ENCODE measurements at regions of chr17 and their contacts with region 1.

Region 1: GRCh38 chr17:50931144-50931908 is 65.2 kb upstream of the TOB1 start:
- DNase-seq: peak; percentile 95
- H3K4me3 ChIP-seq: peak overlapping the region; percentile 41 to 62
- H3K27ac ChIP-seq: peak overlapping the region; percentile 93 to 98
- H3K4me1 ChIP-seq: peaks cover 15 to 41% of the 10 kb centered on the region in 2 experiments
- H3K27me3 ChIP-seq: no peaks in the 10 kb centered on the region
- CTCF ChIP-seq: no peak
- EP300 ChIP-seq: peak in 1 of 2 experiments; percentile 45; a peak in 1 of 4 replicates
- RAD21 ChIP-seq: no peak; the same call in 1 of the 2 replicates

Region 2: DNA sequence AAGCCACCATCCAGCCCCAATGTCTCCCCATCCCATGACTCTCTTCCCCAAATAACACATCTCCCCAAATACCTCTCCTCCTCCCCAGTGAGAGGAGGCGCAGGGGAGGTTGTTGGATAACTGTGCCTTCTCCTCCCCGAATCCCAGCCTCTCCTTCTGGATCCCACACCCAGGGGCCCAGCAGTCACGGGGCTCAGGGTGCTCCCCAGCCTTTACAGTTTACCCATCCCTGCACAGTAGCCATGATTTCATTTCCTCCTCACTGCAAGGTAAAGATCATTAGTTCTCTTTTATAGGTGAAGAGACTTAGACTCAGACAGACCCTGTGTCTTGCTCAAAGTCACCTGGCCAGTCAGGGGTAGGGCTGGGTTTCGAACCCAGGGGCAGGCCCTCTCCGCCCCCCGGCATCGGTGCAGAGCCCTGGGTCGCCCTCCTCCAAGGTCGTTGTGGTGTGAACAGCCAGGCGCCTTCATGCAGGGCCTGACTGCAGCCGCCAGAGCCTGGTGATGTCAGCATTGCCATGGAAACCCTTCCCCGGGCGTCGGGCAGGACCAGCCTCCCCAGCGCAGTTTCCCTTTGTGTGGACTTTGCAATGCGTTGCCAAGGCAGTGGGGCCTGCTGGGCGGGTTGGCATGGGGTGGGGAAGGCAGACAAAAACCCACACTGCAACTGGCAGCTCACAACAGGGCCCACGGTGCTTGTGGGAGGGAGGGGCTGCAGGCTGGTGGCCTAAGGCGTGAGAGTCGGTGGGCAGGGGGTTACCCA is 11.8 kb before region 1 on chr17:
- CTCF ChIA-PET with region 1: interaction called, 4 read pairs
- POLR2A ChIA-PET with region 1: interaction called, 19 read pairs
- DNase-seq: peak; percentile 99
- H3K4me3 ChIP-seq: no peak overlapping the region
- H3K27ac ChIP-seq: peak overlapping the region; percentile 80 to 96
- H3K4me1 ChIP-seq: peaks cover 28 to 39% of the 10 kb centered on the region in 2 experiments
- H3K27me3 ChIP-seq: no peaks in the 10 kb centered on the region
- CTCF ChIP-seq: no peak
- EP300 ChIP-seq: peak in 1 of 2 experiments; percentile 68; a peak in 1 of 4 replicates
- RAD21 ChIP-seq: peak; percentile 43; the same call in 1 of the 2 replicates

Region 3: DNA sequence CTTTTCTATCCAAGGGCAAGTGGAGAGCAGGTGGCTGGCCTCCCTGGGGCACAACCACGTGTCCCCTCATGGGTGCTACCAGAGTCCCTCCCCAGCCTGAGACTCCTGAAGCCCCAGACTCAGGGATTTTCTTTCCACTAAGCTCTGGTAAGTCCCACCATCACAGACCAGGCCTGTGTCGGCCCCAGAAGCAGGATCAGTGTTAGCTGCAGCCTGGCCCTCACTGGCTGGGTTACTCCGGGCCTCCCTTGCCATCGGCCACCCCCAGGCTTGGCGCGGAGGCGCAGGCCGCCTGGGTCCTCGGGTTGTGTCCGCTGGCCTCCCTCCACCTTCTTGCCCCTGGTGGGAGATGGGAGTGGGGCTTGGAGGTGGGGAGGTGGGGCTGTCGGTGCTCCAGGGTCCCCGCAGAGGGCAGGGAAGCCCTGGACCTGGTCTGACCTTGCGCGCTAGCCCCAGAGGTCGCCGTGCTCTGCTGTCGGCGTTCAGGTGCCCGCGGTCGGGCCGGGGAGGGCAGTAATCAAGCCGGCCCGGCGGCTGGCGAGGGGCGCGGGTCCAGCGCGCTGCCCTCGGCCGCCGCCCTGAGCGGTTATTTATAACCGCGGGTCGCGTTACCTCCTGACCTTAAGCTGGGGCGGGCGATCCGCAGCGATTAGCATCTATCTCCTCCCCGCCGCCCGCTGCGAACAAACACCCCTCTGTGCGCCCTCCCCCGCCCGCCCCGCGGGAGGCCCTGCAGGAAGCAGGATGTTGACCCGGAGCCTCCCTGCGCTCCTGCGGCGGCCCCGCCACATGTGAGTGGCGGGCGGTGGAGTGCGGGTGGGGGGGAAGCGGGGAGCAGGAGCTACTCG is 13.0 kb after region 1 on chr17:
- CTCF ChIA-PET with region 1: interaction called, 23 read pairs
- POLR2A ChIA-PET with region 1: interaction called, 24 read pairs
- DNase-seq: peak; percentile 92
- H3K4me3 ChIP-seq: peak overlapping the region; percentile 9 to 21; a peak in 3 of 4 replicates
- H3K27ac ChIP-seq: peak overlapping the region; percentile 25 to 85; a peak in 3 of 4 replicates
- H3K4me1 ChIP-seq: peaks cover 10 to 55% of the 10 kb centered on the region in 2 experiments; a peak in 3 of 4 replicates
- H3K27me3 ChIP-seq: no peaks in the 10 kb centered on the region
- CTCF ChIP-seq: no peak
- EP300 ChIP-seq: peak; percentile 29 to 44; a peak in 1 of 4 replicates
- RAD21 ChIP-seq: no peak

Region 4: DNA sequence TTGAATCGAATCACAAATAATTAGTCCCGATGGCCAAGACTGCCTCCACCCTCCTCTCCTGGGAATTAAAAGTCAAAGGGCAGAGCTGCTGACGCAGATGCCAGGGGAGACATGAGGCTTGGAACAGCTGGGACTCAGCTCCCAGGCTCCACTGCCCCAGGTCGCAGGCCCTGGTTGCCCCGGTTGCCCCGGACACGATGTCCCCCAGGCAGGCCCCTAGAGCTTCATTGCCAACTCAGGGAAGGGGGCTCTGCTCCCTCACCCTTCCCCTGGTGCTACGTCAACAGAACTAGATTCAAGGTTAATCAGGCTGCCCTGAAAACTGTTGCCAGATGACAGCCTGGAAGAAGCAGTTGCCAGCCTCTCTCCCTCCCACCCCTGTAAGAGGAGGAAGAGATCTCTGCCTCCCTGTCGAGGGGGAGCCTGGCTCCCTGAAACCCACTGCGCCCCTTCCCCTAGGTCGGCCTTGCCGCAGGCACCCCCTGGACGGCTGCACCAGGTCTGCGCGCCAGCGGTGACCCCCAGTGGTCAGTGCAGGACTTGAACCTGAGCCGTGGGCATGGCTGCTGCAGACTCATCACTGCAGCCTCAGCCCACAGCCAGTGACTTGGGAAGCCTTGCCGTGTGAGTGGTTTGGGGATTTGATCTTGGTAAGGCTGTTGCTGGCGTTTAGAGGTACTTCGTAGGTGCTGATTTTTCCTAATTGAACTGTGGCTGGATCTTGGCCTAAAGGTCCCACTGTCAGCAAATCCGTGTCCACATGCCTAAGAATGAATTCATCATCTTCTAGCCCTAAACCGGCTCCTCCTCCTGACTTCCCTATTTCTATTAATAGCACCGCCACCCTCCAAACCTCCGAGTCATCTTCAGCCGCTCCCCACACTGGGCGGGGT is 18.9 kb after region 1 on chr17:
- CTCF ChIA-PET with region 1: interaction called, 23 read pairs
- POLR2A ChIA-PET with region 1: interaction called, 24 read pairs
- DNase-seq: peak; percentile 86
- H3K4me3 ChIP-seq: peak overlapping the region in 1 of 2 experiments; percentile 15; a peak in 1 of 4 replicates
- H3K27ac ChIP-seq: peak overlapping the region; percentile 81 to 82
- H3K4me1 ChIP-seq: peaks cover 43 to 81% of the 10 kb centered on the region in 2 experiments
- H3K27me3 ChIP-seq: no peaks in the 10 kb centered on the region
- CTCF ChIP-seq: peak; percentile 95
- EP300 ChIP-seq: peak in 1 of 2 experiments; percentile 33; a peak in 1 of 4 replicates
- RAD21 ChIP-seq: peak; percentile 95